A549 (cell line): ENCODE measurements at regions of chr11 and their contacts with region 1.

Region 1: DNA sequence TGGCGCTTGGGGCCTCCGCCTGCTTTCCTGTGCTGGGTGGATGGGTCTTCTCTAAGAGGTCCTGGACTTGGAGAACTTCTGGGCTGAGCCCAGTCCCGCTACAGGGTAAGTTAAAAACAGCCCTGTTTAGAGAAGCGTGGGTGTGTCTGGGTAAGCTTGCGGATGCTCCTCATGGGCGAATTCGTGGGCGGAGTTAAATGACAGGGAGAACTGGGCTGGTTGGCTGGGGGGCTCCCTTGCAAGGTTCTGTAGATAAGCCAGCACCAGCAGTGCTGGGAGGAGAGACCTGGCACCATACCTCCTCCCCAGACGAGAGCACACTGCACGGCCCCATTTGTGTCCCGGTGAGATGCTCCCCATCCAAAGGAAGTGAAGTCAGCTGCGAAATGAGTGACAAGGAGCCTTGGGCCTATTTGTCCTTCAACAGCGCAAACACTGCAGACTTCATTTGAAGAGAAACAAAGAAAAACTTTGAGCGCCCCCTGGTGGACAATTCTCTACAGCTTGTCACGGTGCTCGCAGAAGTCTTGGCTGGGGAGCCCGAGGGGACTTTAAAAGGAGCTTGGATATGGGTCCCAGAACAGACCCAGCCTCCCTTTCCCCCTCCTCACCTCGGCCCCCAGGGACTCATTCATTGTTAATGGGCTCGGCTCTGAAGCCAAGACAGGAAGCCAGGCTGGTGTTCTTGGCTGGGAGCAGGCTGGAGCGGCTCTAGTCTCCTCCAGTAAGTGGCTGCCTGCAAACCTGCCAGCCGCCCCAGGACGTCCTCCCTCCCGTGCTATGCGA is 39.5 kb downstream of the TP53I11 start:
- DNase-seq: peak; percentile 82 to 88
- ATAC-seq: peak; percentile 75 to 97
- H3K4me3 ChIP-seq: no peak overlapping the region
- H3K27ac ChIP-seq: no peak overlapping the region
- H3K4me1 ChIP-seq: no peaks in the 10 kb centered on the region
- CTCF ChIP-seq: peak; percentile 87
- EP300 ChIP-seq: no peak
- POLR2A ChIP-seq: no peak
- RAD21 ChIP-seq: peak; percentile 83 to 88

Region 2: DNA sequence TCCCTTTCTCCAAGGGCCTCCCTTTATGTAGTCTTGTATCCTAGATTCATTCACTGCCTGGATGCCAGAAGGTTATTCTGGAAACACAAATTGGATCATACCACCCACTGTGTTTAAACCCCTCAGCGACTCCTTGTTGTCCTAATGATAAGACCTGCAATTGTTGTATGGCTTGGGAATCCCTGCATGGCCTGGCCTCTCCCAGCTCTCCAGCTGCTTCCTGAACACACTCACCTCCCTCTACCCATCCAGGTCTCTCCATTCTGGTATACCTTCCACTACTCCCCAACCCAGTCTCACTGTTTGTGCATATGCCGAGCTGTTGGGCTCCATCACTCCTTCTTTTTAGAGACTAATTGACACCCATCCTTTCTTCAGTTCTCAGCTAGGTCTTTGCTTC is 477.0 kb before region 1 on chr11:
- CTCF ChIA-PET with region 1: no interaction called
- POLR2A ChIA-PET with region 1: no interaction called
- DNase-seq: no peak
- ATAC-seq: no peak
- H3K4me3 ChIP-seq: no peak overlapping the region
- H3K27ac ChIP-seq: no peak overlapping the region
- H3K4me1 ChIP-seq: no peaks in the 10 kb centered on the region
- CTCF ChIP-seq: no peak
- EP300 ChIP-seq: no peak
- POLR2A ChIP-seq: no peak
- RAD21 ChIP-seq: no peak

Region 3: GRCh38 chr11:44556735-44557409 is 354.4 kb before region 1 on chr11:
- CTCF ChIA-PET with region 1: interaction called, 33 read pairs
- POLR2A ChIA-PET with region 1: no interaction called
- DNase-seq: peak in 1 of 2 experiments; percentile 64
- ATAC-seq: peak; percentile 73 to 94; a peak in 4 of 6 replicates
- H3K4me3 ChIP-seq: no peak overlapping the region
- H3K27ac ChIP-seq: no peak overlapping the region
- H3K4me1 ChIP-seq: no peaks in the 10 kb centered on the region
- CTCF ChIP-seq: peak; percentile 83
- EP300 ChIP-seq: no peak
- POLR2A ChIP-seq: no peak
- RAD21 ChIP-seq: peak; percentile 91 to 93

Region 4: GRCh38 chr11:44638032-44638431 is 273.2 kb before region 1 on chr11:
- CTCF ChIA-PET with region 1: interaction called, 400 read pairs
- POLR2A ChIA-PET with region 1: no interaction called
- DNase-seq: no peak
- ATAC-seq: no peak
- H3K4me3 ChIP-seq: no peak overlapping the region
- H3K27ac ChIP-seq: no peak overlapping the region
- H3K4me1 ChIP-seq: peaks cover 16% of the 10 kb centered on the region
- CTCF ChIP-seq: no peak
- EP300 ChIP-seq: no peak
- POLR2A ChIP-seq: no peak
- RAD21 ChIP-seq: no peak

Region 5: DNA sequence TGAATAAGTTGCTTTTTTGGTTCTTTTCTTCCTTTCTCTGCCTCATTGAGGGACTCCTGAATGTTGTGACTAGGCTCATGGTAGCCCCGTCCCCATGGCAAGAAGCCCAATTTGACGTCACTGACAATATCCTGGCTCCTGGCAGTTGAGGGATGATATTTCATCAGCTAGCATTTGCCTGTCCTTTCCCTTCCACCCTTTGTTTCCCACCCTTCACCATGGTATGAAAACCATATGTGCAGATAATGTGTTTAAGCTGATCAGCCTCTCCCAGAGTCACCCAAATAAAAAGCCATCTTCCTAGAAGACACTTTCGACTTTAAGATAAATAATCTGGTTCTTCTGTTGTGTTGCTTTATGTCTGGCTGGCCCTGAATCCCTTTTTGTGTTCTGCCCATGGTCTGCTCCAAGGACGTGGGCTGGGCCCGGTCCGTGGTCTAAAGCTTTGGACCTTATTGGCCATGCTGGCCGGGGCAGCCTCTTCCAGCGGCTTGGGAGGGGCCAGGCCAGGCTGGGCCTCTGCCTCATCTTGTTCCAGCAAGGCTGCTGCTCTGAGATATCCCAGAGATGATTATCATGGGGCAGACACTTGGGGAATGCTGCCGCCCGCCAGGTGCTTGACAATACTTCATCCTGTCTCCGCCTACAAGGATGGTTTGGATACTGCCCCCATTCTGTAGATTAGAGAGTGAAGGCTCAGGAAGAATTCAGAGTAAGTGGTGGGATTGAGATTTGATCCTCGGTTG is 179.4 kb before region 1 on chr11:
- CTCF ChIA-PET with region 1: interaction called, 20 read pairs
- POLR2A ChIA-PET with region 1: no interaction called
- DNase-seq: no peak
- ATAC-seq: no peak
- H3K4me3 ChIP-seq: no peak overlapping the region
- H3K27ac ChIP-seq: 0 out of 6 replicates have a peak overlapping the region, but pooled peaks of 1 of the 2 experiments have one; percentile 18
- H3K4me1 ChIP-seq: peaks cover 7% of the 10 kb centered on the region; the same call in 1 of the 3 replicates
- CTCF ChIP-seq: no peak
- EP300 ChIP-seq: no peak
- POLR2A ChIP-seq: no peak
- RAD21 ChIP-seq: no peak

Region 6: DNA sequence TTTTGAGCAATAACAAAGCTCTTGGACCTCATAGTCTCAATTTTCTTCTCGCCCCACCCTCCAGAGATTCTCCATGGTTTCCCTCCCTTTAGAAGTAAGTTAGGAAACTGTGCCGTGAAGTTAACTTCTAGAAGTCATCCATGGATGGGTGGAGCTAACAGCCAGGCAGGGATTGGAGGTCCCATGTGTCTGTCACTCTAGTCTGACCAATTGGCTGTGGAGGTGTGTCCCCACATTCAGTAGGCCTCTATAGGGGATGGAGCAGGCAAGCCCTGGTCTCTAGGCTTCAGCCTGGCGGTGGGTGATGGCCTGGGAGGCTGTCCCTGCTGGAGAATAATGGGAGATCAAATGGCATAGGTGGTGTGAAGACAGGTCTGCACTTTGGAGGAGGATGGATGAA is 11.3 kb before region 1 on chr11:
- CTCF ChIA-PET with region 1: interaction called, 71 read pairs
- POLR2A ChIA-PET with region 1: no interaction called
- DNase-seq: peak; percentile 27 to 73
- ATAC-seq: peak; percentile 31 to 79; a peak in 3 of 6 replicates
- H3K4me3 ChIP-seq: no peak overlapping the region
- H3K27ac ChIP-seq: no peak overlapping the region
- H3K4me1 ChIP-seq: no peaks in the 10 kb centered on the region
- CTCF ChIP-seq: no peak
- EP300 ChIP-seq: no peak
- POLR2A ChIP-seq: no peak
- RAD21 ChIP-seq: no peak